ENCODE measurements at regions of chr4 and their contacts with region 1.

Region 1: DNA sequence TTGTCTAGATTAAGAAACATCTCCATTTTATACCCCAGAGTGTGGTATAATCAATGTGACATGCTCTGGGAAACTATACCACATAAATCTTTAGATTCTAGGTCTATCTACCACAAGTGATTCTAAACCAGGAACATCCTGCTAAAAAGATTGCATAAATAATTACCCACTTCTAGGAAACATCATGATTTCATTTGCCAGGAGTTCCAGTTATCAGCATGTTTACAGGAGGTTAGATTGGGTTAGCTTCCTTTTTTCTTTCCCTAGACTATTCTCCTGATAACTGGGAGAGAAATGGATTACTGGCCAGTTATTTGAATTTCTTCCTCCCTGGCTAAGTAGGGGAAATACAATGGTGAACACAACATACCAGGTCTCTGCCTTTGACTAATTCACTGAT is 230.3 kb upstream of the BOD1L1 start:
- DNase-seq: no peak
- H3K4me3 ChIP-seq: no peak overlapping the region
- H3K27ac ChIP-seq: no peak overlapping the region
- H3K4me1 ChIP-seq: no peaks in the 10 kb centered on the region
- H3K27me3 ChIP-seq: no peaks in the 10 kb centered on the region
- CTCF ChIP-seq: no peak
- POLR2A ChIP-seq: no peak

Region 2: GRCh38 chr4:13920901-13921300 is 63.1 kb after region 1 on chr4:
- intact Hi-C with region 1: loop called (anchors 5 kb)
- DNase-seq: no peak
- H3K4me3 ChIP-seq: no peak overlapping the region
- H3K27ac ChIP-seq: no peak overlapping the region
- H3K4me1 ChIP-seq: peaks cover 15% of the 10 kb centered on the region
- H3K27me3 ChIP-seq: no peaks in the 10 kb centered on the region
- CTCF ChIP-seq: no peak
- POLR2A ChIP-seq: no peak

Region 3: GRCh38 chr4:13988353-13989305 is 130.8 kb after region 1 on chr4:
- intact Hi-C with region 1: no loop called
- DNase-seq: no peak
- H3K4me3 ChIP-seq: no peak overlapping the region
- H3K27ac ChIP-seq: no peak overlapping the region
- H3K4me1 ChIP-seq: no peaks in the 10 kb centered on the region
- H3K27me3 ChIP-seq: no peaks in the 10 kb centered on the region
- CTCF ChIP-seq: no peak
- POLR2A ChIP-seq: no peak

Measured in vagina (tissue), 2 donors.